Activated CD8-positive, alpha-beta T cell treated with anti-CD3 and anti-CD28 coated beads for 36 hours (primary cell): ENCODE measurements at regions of chr2 and their contacts with region 1.

Region 1: GRCh38 chr2:197113275-197113711 is 186.8 kb upstream of the PGAP1 start:
- DNase-seq: no peak
- ATAC-seq: no peak
- H3K4me3 Mint-ChIP-seq: no peak overlapping the region
- H3K27ac Mint-ChIP-seq: peak overlapping the region; percentile 82
- H3K4me1 Mint-ChIP-seq: peaks cover 32% of the 10 kb centered on the region
- H3K27me3 Mint-ChIP-seq: no peaks in the 10 kb centered on the region
- CTCF ChIP-seq: peak; percentile 75

Region 2: GRCh38 chr2:197088694-197089093 is 24.6 kb before region 1 on chr2:
- CTCF ChIA-PET with region 1: interaction called, 12 read pairs
- POLR2A ChIA-PET with region 1: no interaction called
- intact Hi-C with region 1: no loop called
- DNase-seq: no peak
- ATAC-seq: no peak
- H3K4me3 Mint-ChIP-seq: no peak overlapping the region
- H3K27ac Mint-ChIP-seq: peak overlapping the region; percentile 17
- H3K4me1 Mint-ChIP-seq: peaks cover 12% of the 10 kb centered on the region
- H3K27me3 Mint-ChIP-seq: no peaks in the 10 kb centered on the region
- CTCF ChIP-seq: no peak

Region 3: GRCh38 chr2:197152451-197153228 is 39.3 kb after region 1 on chr2:
- CTCF ChIA-PET with region 1: interaction called, 17 read pairs
- POLR2A ChIA-PET with region 1: no interaction called
- intact Hi-C with region 1: no loop called
- DNase-seq: no peak
- ATAC-seq: peak; percentile 70
- H3K4me3 Mint-ChIP-seq: peak overlapping the region; percentile 25
- H3K27ac Mint-ChIP-seq: peak overlapping the region; percentile 88
- H3K4me1 Mint-ChIP-seq: peaks cover 75% of the 10 kb centered on the region
- H3K27me3 Mint-ChIP-seq: no peaks in the 10 kb centered on the region
- CTCF ChIP-seq: peak; percentile 34

Region 4: GRCh38 chr2:197184959-197185586 is 71.8 kb after region 1 on chr2:
- CTCF ChIA-PET with region 1: interaction called, 42 read pairs
- POLR2A ChIA-PET with region 1: no interaction called
- intact Hi-C with region 1: loop called (anchors 5 kb)
- DNase-seq: no peak
- ATAC-seq: peak; percentile 32
- H3K4me3 Mint-ChIP-seq: no peak overlapping the region
- H3K27ac Mint-ChIP-seq: peak overlapping the region; percentile 51
- H3K4me1 Mint-ChIP-seq: peaks cover 75% of the 10 kb centered on the region
- H3K27me3 Mint-ChIP-seq: no peaks in the 10 kb centered on the region
- CTCF ChIP-seq: no peak

Region 5: GRCh38 chr2:197310271-197310985 is 197.1 kb after region 1 on chr2 and contains the start of gene ANKRD44:
- CTCF ChIA-PET with region 1: interaction called, 23 read pairs
- POLR2A ChIA-PET with region 1: no interaction called
- intact Hi-C with region 1: loop called (anchors 5 kb)
- DNase-seq: peak; percentile 91
- ATAC-seq: peak; percentile 65
- H3K4me3 Mint-ChIP-seq: peak within 1 kb of the TSS; percentile 96
- H3K27ac Mint-ChIP-seq: peak within 1 kb of the TSS; percentile 99
- H3K4me1 Mint-ChIP-seq: peaks cover 63% of the 10 kb centered on the region
- H3K27me3 Mint-ChIP-seq: no peaks in the 10 kb centered on the region
- CTCF ChIP-seq: no peak
- total RNA-seq, gene ANKRD44: 131 to 132 TPM

Region 6: GRCh38 chr2:197363998-197364538 is 250.8 kb after region 1 on chr2:
- CTCF ChIA-PET with region 1: interaction called, 15 read pairs
- POLR2A ChIA-PET with region 1: interaction called, 5 read pairs
- intact Hi-C with region 1: no loop called
- DNase-seq: no peak
- ATAC-seq: no peak
- H3K4me3 Mint-ChIP-seq: no peak overlapping the region
- H3K27ac Mint-ChIP-seq: no peak overlapping the region
- H3K4me1 Mint-ChIP-seq: peaks cover 20% of the 10 kb centered on the region
- H3K27me3 Mint-ChIP-seq: no peaks in the 10 kb centered on the region
- CTCF ChIP-seq: no peak